ENCODE measurements at regions of chr2 and their contacts with region 1.

Region 1: GRCh38 chr2:217785544-217786045 is 217.2 kb downstream of the TNS1 start:
- DNase-seq: peak in 1 of 2 donors; percentile 86
- H3K4me3 ChIP-seq: no peak overlapping the region
- H3K27ac ChIP-seq: peak overlapping the region; percentile 59 to 63
- H3K4me1 ChIP-seq: peaks cover 0 to 3% of the 10 kb centered on the region in 2 donors
- H3K27me3 ChIP-seq: no peaks in the 10 kb centered on the region
- CTCF ChIP-seq: peak; percentile 90 to 92 (median 92)

Region 2: DNA sequence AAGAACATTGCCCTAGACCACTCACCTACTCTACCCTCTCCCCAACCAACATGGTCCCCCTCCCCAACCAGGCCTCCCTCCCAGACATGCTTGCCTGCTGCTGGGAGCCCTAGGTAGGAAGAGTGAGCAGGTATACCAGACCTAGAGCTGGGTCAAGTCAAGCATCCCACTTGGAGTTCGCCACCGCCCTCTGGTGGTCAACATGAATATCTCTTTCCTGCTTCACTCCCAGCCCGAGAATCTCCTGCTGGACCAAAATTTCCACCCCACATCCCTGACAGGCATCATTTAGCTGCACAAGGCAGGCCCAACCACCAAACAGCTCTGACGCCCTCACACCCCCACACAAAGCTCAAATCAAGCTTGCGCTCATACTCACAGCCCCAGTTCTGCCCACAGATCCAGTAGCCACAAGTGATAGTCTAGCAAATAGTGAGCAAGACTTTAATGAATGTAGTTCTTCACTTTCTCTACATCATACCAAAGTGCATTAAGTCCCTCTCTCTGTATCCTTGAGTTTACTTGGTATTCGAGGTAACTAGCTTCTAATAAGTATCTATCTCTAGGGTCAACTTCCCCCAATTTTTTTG is 101.2 kb after region 1 on chr2:
- intact Hi-C with region 1: loop called (anchors 2 kb)
- DNase-seq: peak in 1 of 2 donors; percentile 81
- H3K4me3 ChIP-seq: no peak overlapping the region
- H3K27ac ChIP-seq: peak overlapping the region; percentile 76 to 98
- H3K4me1 ChIP-seq: peaks cover 11 to 33% of the 10 kb centered on the region in 2 donors
- H3K27me3 ChIP-seq: no peaks in the 10 kb centered on the region
- CTCF ChIP-seq: peak; percentile 69 to 78 (median 73)

Region 3: DNA sequence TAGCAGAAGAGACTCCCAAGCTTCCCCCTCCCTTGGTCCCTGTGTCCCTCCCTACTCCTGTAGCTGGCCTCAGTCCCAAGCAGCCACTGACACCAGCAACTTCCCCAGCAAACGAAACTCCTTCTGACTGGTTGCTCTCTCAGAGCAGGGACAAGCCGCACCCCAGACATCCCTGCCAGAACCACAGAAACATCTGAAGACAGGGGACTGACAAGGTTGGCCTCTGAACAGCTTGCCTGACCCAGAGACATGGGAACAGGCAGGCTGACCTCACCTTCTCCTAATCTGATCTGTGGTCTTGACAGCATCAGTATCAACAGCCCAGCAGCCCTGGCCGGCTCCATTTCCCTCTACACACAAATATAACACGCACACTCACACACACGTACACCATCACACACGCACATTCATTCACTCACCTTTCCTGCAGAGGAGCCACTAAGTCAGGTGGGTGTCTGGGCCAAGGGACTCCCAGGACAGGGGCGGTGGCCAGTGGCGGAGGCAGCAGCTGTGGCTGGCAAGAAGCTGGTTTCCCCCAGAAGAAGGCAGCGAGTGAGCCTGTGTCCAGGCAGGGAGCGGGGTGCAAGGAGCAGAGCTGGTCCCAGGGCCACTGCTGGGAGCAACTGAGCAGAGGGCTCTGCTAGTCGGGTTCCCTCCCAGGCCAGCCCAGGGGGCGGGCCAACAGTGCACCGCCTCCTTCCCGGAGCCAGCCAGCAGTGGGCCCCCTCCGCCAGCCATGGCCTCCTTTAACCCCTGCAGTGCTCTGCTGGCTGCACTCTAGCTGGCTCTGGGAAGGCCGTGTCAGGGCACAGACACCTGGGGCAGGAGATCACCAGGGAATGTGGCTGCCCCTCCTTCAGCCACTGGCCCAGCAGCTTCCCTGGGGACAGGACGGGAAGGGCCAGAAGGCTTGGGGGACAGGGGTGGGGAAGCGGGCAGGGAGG is 158.1 kb after region 1 on chr2:
- intact Hi-C with region 1: loop called (anchors 5 kb)
- DNase-seq: peak; percentile 36 to 92
- H3K4me3 ChIP-seq: peak overlapping the region; percentile 64 to 81
- H3K27ac ChIP-seq: peak overlapping the region; percentile 98 to 100
- H3K4me1 ChIP-seq: peaks cover 9 to 40% of the 10 kb centered on the region in 2 donors
- H3K27me3 ChIP-seq: no peaks in the 10 kb centered on the region
- CTCF ChIP-seq: peak; percentile 37 to 54 (median 38)

Region 4: GRCh38 chr2:217988014-217988839 is 202.6 kb after region 1 on chr2:
- intact Hi-C with region 1: loop called (anchors 1 kb)
- DNase-seq: peak in 1 of 2 donors; percentile 93
- H3K4me3 ChIP-seq: peak overlapping the region; percentile 19 to 47
- H3K27ac ChIP-seq: peak overlapping the region; percentile 57 to 68
- H3K4me1 ChIP-seq: peaks cover 8 to 20% of the 10 kb centered on the region in 2 donors
- H3K27me3 ChIP-seq: no peaks in the 10 kb centered on the region
- CTCF ChIP-seq: peak; percentile 91 to 97 (median 95)

Region 5: DNA sequence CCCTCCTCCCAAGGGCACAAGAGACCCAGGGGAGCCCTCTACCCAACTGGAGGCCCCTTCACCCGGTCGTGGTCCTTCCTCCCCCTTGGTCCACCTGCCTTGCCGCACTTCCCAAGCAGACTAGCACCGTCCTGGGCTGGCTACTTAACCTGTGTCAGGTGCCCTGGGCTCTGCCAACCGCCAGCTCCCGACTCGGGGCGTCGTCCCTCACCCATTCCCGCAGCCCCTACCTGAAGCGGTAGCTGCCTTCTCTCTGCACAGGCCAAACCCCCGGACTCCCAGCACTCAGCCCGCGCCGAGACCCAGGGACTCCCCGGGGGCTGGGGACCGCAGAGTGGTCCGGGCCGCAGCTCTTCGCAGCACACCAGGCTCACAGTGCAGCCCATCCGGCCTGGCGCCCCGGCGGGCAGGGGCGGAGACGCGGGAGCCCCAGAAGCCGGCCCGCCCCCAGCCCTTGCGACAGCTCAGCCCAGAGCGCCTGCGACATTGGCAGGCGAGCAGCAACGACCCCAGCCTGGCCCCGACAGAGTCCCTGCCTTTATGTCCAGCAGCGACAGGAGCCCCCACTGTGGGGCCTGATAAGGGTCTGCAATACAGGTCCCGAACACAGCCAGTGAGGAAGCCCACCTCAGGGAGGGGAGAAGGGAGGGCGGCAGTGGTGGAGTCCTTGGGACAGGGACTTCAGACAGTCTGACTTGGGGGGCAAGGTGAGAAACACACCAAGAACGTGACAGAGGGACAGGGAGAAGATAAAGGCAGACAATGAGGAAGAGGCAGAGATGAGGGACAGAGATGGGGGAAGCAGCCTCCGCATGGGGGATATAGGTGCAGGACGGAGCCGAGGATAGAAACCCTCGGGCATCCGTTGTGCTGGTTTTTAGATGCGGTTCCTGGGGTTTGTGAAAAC is 248.2 kb after region 1 on chr2:
- intact Hi-C with region 1: loop called (anchors 2 kb)
- DNase-seq: no peak
- H3K4me3 ChIP-seq: peak overlapping the region; percentile 24 to 55
- H3K27ac ChIP-seq: no peak overlapping the region
- H3K4me1 ChIP-seq: peaks cover 0 to 22% of the 10 kb centered on the region in 2 donors
- H3K27me3 ChIP-seq: no peaks in the 10 kb centered on the region
- CTCF ChIP-seq: no peak

Region 6: GRCh38 chr2:218063486-218063885 is 277.9 kb after region 1 on chr2:
- intact Hi-C with region 1: loop called (anchors 1 kb)
- DNase-seq: no peak
- H3K4me3 ChIP-seq: no peak overlapping the region
- H3K27ac ChIP-seq: no peak overlapping the region
- H3K4me1 ChIP-seq: peaks cover 0 to 2% of the 10 kb centered on the region in 2 donors
- H3K27me3 ChIP-seq: no peaks in the 10 kb centered on the region
- CTCF ChIP-seq: no peak

Measured in ascending aorta (tissue), 2 donors.